PC-3 (cell line): ENCODE measurements at regions of chr6 and their contacts with region 1.

Region 1: GRCh38 chr6:52020945-52021570 is 66.4 kb downstream of the PKHD1 start:
- DNase-seq: peak; percentile 64
- ATAC-seq: no peak
- H3K4me3 ChIP-seq: no peak overlapping the region
- H3K27ac ChIP-seq: no peak overlapping the region
- H3K4me1 ChIP-seq: no peaks in the 10 kb centered on the region
- H3K27me3 ChIP-seq: peaks cover 12% of the 10 kb centered on the region; the same call in 1 of the 2 replicates
- CTCF ChIP-seq: peak; percentile 84

Region 2: GRCh38 chr6:50655848-50656453 is 1365.1 kb before region 1 on chr6:
- CTCF ChIA-PET with region 1: no interaction called
- POLR2A ChIA-PET with region 1: no interaction called
- intact Hi-C with region 1: loop called (anchors 10 kb)
- DNase-seq: peak; percentile 39
- ATAC-seq: no peak
- H3K4me3 ChIP-seq: no peak overlapping the region
- H3K27ac ChIP-seq: no peak overlapping the region
- H3K4me1 ChIP-seq: peaks cover 28% of the 10 kb centered on the region
- H3K27me3 ChIP-seq: no peaks in the 10 kb centered on the region
- CTCF ChIP-seq: peak; percentile 74

Region 3: DNA sequence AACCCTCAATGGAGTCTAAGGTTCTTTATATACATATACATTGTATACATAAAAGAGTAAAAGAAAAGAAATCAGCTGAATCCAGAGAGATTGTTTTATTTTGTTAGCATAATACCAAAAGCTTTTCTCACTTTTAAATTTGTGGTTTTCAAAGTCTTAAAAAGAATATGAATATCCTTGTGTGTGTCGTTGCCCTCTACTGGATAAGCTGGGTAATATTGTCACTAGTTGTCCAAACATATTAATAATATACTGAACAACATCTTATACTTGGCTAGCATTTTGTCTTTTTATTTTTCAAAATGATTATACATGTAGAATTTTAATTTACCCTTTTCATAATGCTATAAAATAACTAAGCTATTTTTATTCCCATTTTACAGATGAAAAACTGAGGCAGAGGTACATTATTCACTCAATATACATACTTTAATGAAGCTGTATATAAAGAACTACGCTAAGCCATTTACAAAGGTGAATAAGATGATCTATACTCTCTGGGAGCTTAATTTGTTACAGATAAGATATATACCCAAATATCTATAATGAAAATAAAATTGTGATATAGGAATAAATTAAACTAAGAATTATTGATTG is 670.7 kb before region 1 on chr6:
- CTCF ChIA-PET with region 1: interaction called, 4 read pairs
- POLR2A ChIA-PET with region 1: no interaction called
- intact Hi-C with region 1: loop called (anchors 10 kb)
- DNase-seq: peak; percentile 45
- ATAC-seq: no peak
- H3K4me3 ChIP-seq: no peak overlapping the region
- H3K27ac ChIP-seq: no peak overlapping the region
- H3K4me1 ChIP-seq: no peaks in the 10 kb centered on the region
- H3K27me3 ChIP-seq: no peaks in the 10 kb centered on the region
- CTCF ChIP-seq: peak; percentile 74

Region 4: GRCh38 chr6:51531623-51532022 is 489.4 kb before region 1 on chr6:
- CTCF ChIA-PET with region 1: no interaction called
- POLR2A ChIA-PET with region 1: no interaction called
- intact Hi-C with region 1: loop called (anchors 5 kb)
- DNase-seq: no peak
- ATAC-seq: peak; percentile 51
- H3K4me3 ChIP-seq: no peak overlapping the region
- H3K27ac ChIP-seq: no peak overlapping the region
- H3K4me1 ChIP-seq: peaks cover 5% of the 10 kb centered on the region; the same call in 1 of the 2 replicates
- H3K27me3 ChIP-seq: peaks cover 4% of the 10 kb centered on the region; the same call in 1 of the 2 replicates
- CTCF ChIP-seq: peak; percentile 44

Region 5: GRCh38 chr6:51855310-51856082 is 165.6 kb before region 1 on chr6:
- CTCF ChIA-PET with region 1: no interaction called
- POLR2A ChIA-PET with region 1: no interaction called
- intact Hi-C with region 1: loop called (anchors 1 kb)
- DNase-seq: peak; percentile 94
- ATAC-seq: peak; percentile 59
- H3K4me3 ChIP-seq: no peak overlapping the region
- H3K27ac ChIP-seq: peak overlapping the region; percentile 86; the same call in 1 of the 2 replicates
- H3K4me1 ChIP-seq: peaks cover 31% of the 10 kb centered on the region
- H3K27me3 ChIP-seq: no peaks in the 10 kb centered on the region
- CTCF ChIP-seq: peak; percentile 92

Region 6: GRCh38 chr6:52059821-52060220 is 38.8 kb after region 1 on chr6:
- CTCF ChIA-PET with region 1: no interaction called
- POLR2A ChIA-PET with region 1: no interaction called
- intact Hi-C with region 1: no loop called
- DNase-seq: peak; percentile 60
- ATAC-seq: no peak
- H3K4me3 ChIP-seq: no peak overlapping the region
- H3K27ac ChIP-seq: no peak overlapping the region
- H3K4me1 ChIP-seq: peaks cover 6% of the 10 kb centered on the region; the same call in 1 of the 2 replicates
- H3K27me3 ChIP-seq: no peaks in the 10 kb centered on the region
- CTCF ChIP-seq: no peak